Aorta (tissue), 5 donors: ENCODE measurements at regions of chr4 and their contacts with region 1.

Region 1: GRCh38 chr4:102826890-102827673 is at the start of gene UBE2D3:
- DNase-seq: peak; percentile 97
- ATAC-seq: peak; percentile 92
- H3K4me3 ChIP-seq: peak within 1 kb of the TSS; percentile 57 to 94
- H3K27ac ChIP-seq: peak within 1 kb of the TSS; percentile 90 to 97
- H3K4me1 ChIP-seq: peaks cover 0 to 8% of the 10 kb centered on the region in 2 donors
- H3K27me3 ChIP-seq: no peaks in the 10 kb centered on the region
- total RNA-seq, gene UBE2D3: 274 to 292 TPM

Region 2: GRCh38 chr4:102620697-102621497 is 206.2 kb before region 1 on chr4:
- intact Hi-C with region 1: loop called in 1 of 2 experiments (anchors 2 kb)
- DNase-seq: no peak
- ATAC-seq: peak; percentile 88
- H3K4me3 ChIP-seq: no peak overlapping the region
- H3K27ac ChIP-seq: peak overlapping the region in 1 of 2 donors; percentile 58
- H3K4me1 ChIP-seq: peaks cover 0 to 2% of the 10 kb centered on the region in 2 donors
- H3K27me3 ChIP-seq: no peaks in the 10 kb centered on the region

Region 3: DNA sequence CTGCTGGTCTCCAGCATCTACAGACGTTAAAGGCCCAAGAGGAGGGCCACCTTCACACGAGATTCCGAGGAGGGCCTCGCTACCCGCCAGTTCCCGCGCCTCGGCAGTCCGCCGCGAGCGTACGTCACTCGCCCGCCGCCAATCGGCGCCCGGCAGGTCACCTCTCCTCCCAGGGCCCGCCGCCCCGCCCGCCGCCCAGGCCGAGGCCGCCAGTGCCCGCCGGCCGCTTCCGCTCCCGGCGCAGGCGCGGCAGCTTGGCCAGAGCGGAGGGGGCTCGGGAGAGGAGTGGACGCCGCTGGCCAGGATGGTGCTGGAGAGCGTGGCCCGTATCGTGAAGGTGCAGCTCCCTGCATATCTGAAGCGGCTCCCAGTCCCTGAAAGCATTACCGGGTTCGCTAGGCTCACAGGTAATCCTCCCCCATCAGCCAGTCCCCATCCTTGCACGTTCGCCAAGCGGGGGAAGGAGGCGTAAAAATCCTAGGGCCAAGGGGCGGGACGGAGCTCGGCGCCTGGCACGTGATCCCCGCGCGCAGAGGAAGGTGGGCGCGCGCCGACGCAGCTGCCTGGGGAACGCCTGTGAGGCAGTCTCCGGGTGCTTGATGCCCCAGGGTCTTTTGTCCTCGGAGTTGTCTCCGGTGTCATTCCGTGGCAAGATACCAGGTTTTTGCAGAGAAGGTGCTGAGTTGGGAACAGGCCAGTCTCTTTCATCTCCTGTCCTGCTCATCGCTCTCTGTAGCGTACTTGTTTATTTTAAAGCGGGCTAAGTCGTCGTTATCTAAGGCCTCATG is 41.9 kb after region 1 on chr4 and contains the start of gene CISD2:
- intact Hi-C with region 1: loop called (anchors 1 to 5 kb)
- DNase-seq: peak; percentile 96 to 98
- ATAC-seq: peak; percentile 99
- H3K4me3 ChIP-seq: peak within 1 kb of the TSS; percentile 59 to 74
- H3K27ac ChIP-seq: peak within 1 kb of the TSS; percentile 88 to 93
- H3K4me1 ChIP-seq: no peaks in the 10 kb centered on the region
- H3K27me3 ChIP-seq: no peaks in the 10 kb centered on the region
- total RNA-seq, gene CISD2: 16.7 to 19.3 TPM

Region 4: GRCh38 chr4:103099691-103100392 is 272.8 kb after region 1 on chr4 and contains the start of gene BDH2:
- intact Hi-C with region 1: loop called in 1 of 2 experiments (anchors 10 kb)
- DNase-seq: no peak
- ATAC-seq: peak; percentile 96
- H3K4me3 ChIP-seq: peak within 1 kb of the TSS; percentile 89 to 96
- H3K27ac ChIP-seq: peak within 1 kb of the TSS; percentile 48 to 79
- H3K4me1 ChIP-seq: peaks cover 0 to 4% of the 10 kb centered on the region in 2 donors
- H3K27me3 ChIP-seq: no peaks in the 10 kb centered on the region
- total RNA-seq, gene BDH2: 44.1 to 63.8 TPM

Region 5: DNA sequence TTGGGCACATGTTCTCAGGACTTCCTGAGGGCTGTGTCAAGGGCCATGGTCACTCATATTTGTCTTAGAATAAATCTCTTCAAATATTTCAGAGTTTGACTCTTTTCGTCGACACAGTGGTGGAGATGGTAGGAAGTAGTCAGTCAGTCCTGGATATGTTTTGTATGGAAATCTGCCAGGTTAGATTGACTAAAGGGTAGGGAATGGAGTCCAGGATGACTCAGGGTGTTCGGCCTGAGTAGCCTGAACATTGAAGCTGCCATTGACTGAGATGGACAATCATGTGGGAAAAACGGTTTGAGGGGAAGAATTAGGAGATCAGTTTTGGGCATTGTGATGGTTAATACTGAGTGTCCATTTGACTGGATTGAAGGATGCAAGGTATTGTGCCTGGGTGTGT is 548.2 kb after region 1 on chr4:
- intact Hi-C with region 1: no loop called
- DNase-seq: no peak
- ATAC-seq: no peak
- H3K4me3 ChIP-seq: no peak overlapping the region
- H3K27ac ChIP-seq: no peak overlapping the region
- H3K4me1 ChIP-seq: no peaks in the 10 kb centered on the region
- H3K27me3 ChIP-seq: peaks cover 0 to 2% of the 10 kb centered on the region in 2 donors